ENCODE measurements at regions of chr10 and their contacts with region 1.

Region 1: GRCh38 chr10:77603534-77603927 is 34.1 kb downstream of the KCNMA1 start:
- DNase-seq: no peak
- H3K4me3 ChIP-seq: no peak overlapping the region
- H3K27ac ChIP-seq: no peak overlapping the region
- H3K4me1 ChIP-seq: peaks cover 1 to 8% (median 4%) of the 10 kb centered on the region in 4 experiments; a peak in 4 of 7 replicates
- H3K27me3 ChIP-seq: no peaks in the 10 kb centered on the region
- CTCF ChIP-seq: no peak
- EP300 ChIP-seq: no peak
- POLR2A ChIP-seq: no peak
- RAD21 ChIP-seq: no peak

Region 2: DNA sequence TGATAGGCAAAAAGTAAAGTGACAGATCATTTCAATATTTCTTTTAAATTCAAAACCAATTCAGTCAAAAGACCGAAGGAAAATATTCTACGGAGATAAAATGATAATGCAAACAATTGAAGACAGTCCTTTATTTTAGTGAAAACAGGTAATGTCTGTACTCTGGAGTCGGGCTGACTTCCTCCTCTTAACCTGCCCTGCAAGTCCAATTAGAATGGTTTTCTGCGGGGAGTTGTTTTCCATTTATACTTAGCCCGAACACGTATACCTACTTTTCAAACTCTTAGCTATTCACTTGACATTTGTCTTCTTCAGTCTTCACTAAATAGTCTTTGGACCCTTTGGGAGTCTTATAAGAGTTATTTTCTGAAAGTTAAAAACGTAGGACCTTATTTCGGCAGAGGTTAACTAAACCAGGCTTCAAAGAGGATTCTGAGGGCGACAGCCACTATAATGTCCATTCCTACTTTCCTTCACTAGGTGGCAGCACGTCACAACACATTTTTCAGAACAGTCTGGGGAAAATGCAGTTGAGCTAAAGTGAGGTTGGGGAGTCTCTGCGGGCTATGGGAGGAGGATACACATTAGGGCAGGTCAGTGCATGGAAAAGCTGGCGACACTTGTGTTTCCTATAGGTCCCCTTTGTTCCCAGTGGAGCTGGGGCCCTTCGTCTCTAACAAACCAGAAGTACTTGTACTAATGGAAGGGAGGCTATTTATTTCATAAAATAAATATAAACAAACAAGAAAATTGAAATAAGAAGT is 437.9 kb before region 1 on chr10:
- CTCF ChIA-PET with region 1: interaction called, 14 read pairs
- POLR2A ChIA-PET with region 1: no interaction called
- DNase-seq: peak; percentile 41 to 74
- H3K4me3 ChIP-seq: no peak overlapping the region
- H3K27ac ChIP-seq: no peak overlapping the region
- H3K4me1 ChIP-seq: no peaks in the 10 kb centered on the region
- H3K27me3 ChIP-seq: no peaks in the 10 kb centered on the region
- CTCF ChIP-seq: peak; percentile 26 to 84 (median 71)
- EP300 ChIP-seq: no peak
- POLR2A ChIP-seq: no peak
- RAD21 ChIP-seq: peak; percentile 91 to 95

Region 3: GRCh38 chr10:77522268-77522809 is 81.2 kb before region 1 on chr10:
- CTCF ChIA-PET with region 1: interaction called, 11 read pairs
- POLR2A ChIA-PET with region 1: no interaction called
- DNase-seq: no peak
- H3K4me3 ChIP-seq: no peak overlapping the region
- H3K27ac ChIP-seq: no peak overlapping the region
- H3K4me1 ChIP-seq: peaks cover 3 to 11% (median 5%) of the 10 kb centered on the region in 4 experiments; a peak in 6 of 7 replicates
- H3K27me3 ChIP-seq: no peaks in the 10 kb centered on the region
- CTCF ChIP-seq: no peak
- EP300 ChIP-seq: no peak
- POLR2A ChIP-seq: no peak
- RAD21 ChIP-seq: no peak

Region 4: DNA sequence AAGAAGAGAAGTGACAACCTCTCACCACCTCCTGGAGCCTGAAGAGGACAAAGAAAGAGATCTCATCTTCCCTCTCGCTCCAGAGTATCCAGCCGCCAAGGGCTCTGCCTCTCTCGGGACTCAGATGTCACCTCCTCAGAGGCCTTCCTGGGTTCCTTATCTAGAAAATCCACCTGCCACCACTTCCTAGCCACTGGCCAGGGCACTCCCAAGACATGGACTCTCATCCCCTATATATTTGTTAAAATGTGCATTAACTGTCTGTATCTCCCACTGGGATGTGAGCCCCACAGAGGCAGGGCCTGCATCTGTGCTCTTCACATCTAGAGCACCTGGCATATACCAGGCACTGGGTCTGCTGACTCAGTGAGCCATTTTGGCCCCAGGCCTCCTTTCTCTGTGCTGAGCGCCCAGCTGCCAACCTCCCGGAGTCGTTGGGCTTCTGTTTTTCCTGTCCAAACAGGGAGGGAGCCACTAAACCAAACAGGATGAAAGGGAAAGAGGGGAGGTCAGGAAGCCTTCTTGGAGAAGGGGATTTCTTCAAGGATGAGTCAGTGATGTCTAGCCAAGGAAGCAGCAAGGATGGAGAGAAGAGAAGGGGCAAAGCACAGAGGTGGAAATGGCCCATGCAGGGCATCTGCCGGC is 24.8 kb before region 1 on chr10:
- CTCF ChIA-PET with region 1: no interaction called
- POLR2A ChIA-PET with region 1: no interaction called
- DNase-seq: no peak
- H3K4me3 ChIP-seq: no peak overlapping the region
- H3K27ac ChIP-seq: no peak overlapping the region
- H3K4me1 ChIP-seq: no peaks in the 10 kb centered on the region
- H3K27me3 ChIP-seq: no peaks in the 10 kb centered on the region
- CTCF ChIP-seq: no peak
- EP300 ChIP-seq: no peak
- POLR2A ChIP-seq: no peak
- RAD21 ChIP-seq: no peak

Region 5: DNA sequence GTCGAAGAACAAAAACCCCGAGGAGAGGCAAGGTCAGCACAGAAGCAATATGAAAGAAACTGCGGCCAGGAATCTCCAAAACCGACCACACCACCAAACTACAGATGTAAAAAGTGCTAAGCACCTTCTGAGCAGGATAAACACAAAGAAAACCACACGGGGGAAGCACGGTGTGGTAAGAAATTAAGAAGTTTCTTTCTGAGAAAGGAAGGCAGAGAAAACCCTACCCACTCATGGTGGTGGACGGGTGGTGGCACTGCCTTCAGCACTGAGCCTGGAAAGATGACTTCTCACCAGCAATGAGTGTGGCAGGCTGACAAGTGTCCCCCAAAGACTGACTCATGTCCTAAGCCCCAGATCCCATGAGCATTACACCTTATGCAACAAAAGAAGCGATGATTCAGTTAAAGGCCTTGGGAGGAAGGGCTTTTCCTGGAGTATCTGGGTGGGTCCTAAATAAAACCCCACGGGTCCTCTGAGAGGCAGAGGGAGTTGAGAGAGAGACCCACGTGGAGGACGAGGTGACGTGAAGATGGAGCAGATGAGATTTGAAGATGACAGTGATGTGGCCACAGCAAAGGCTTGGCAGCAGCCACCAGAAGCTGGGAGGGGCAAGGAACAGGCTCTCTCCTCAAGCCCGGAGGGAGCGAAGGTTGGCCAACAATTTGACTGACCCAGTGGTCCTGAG is 198.1 kb after region 1 on chr10:
- CTCF ChIA-PET with region 1: no interaction called
- POLR2A ChIA-PET with region 1: no interaction called
- DNase-seq: no peak
- H3K4me3 ChIP-seq: no peak overlapping the region
- H3K27ac ChIP-seq: no peak overlapping the region
- H3K4me1 ChIP-seq: peaks cover 4 to 14% (median 8%) of the 10 kb centered on the region in 4 experiments; a peak in 5 of 7 replicates
- H3K27me3 ChIP-seq: no peaks in the 10 kb centered on the region
- CTCF ChIP-seq: no peak
- EP300 ChIP-seq: no peak
- POLR2A ChIP-seq: no peak
- RAD21 ChIP-seq: no peak